ENCODE measurements at regions of chr11 and their contacts with region 1.

Region 1: GRCh38 chr11:61384271-61385242 is 7.8 kb upstream of the TMEM216 start:
- DNase-seq: no peak
- ATAC-seq: peak; percentile 13 to 40 (median 19)
- H3K4me3 ChIP-seq: no peak overlapping the region
- H3K27ac ChIP-seq: no peak overlapping the region
- H3K4me1 ChIP-seq: peaks cover 5% of the 10 kb centered on the region
- H3K27me3 ChIP-seq: no peaks in the 10 kb centered on the region
- CTCF ChIP-seq: no peak

Region 2: GRCh38 chr11:61041755-61042518 is 342.6 kb before region 1 on chr11:
- intact Hi-C with region 1: no loop called
- DNase-seq: no peak
- ATAC-seq: peak in 2 of 4 donors; percentile 42 to 49
- H3K4me3 ChIP-seq: no peak overlapping the region
- H3K27ac ChIP-seq: no peak overlapping the region
- H3K4me1 ChIP-seq: no peaks in the 10 kb centered on the region
- H3K27me3 ChIP-seq: no peaks in the 10 kb centered on the region
- CTCF ChIP-seq: no peak

Region 3: GRCh38 chr11:61315260-61315659 is 69.3 kb before region 1 on chr11:
- intact Hi-C with region 1: no loop called
- DNase-seq: no peak
- ATAC-seq: peak in 1 of 4 donors; percentile 40
- H3K4me3 ChIP-seq: no peak overlapping the region
- H3K27ac ChIP-seq: no peak overlapping the region
- H3K4me1 ChIP-seq: no peaks in the 10 kb centered on the region
- H3K27me3 ChIP-seq: no peaks in the 10 kb centered on the region
- CTCF ChIP-seq: no peak

Region 4: DNA sequence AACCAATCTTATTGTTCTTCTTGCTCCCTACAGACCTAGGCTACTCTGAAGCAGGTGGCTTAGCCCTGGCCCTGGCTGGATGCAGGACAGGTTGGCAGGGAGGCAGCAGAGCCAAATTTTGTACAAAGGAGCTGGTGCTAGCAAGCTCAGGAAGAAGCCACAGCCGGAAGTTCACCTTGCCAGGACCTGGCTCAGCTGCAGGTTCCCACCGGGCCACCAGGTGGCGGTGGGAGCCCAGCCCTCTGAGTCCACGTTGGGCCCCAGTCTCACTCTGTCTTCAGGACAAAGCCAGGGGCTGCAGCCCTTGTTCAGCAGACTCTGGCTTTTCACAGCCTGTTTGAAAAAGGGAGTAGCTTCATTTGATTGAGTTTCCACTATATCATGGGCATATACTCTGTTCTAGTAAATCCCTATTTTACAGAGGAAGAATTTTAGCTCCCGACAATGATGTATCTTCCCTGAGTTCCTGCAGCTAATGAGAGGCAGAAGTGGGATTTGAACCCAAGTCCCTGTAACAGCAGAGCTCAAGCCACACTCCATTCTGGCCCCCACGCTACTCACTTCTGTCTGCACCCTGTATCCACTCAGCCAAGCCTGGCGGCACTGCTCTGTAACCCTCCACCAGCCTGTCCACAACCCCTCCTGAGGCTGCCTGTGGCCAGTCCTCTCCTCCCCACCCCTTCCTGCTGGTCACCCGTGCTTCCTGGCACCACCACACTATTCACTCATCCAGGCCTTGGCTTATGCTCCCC is 48.2 kb before region 1 on chr11:
- intact Hi-C with region 1: loop called (anchors 1 to 2 kb)
- DNase-seq: peak; percentile 77 to 90
- ATAC-seq: peak; percentile 70 to 76 (median 74)
- H3K4me3 ChIP-seq: no peak overlapping the region
- H3K27ac ChIP-seq: peak overlapping the region; percentile 48
- H3K4me1 ChIP-seq: peaks cover 17% of the 10 kb centered on the region
- H3K27me3 ChIP-seq: no peaks in the 10 kb centered on the region
- CTCF ChIP-seq: peak; percentile 98

Measured in psoas muscle (tissue), 8 donors.